Mammary epithelial cell (primary cell): ENCODE measurements at regions of chr16 and their contacts with region 1.

Region 1: GRCh38 chr16:79510879-79511278 is 89.7 kb downstream of the MAF start:
- DNase-seq: no peak
- H3K4me3 ChIP-seq: no peak overlapping the region
- H3K27ac ChIP-seq: no peak overlapping the region
- H3K4me1 ChIP-seq: no peaks in the 10 kb centered on the region
- H3K27me3 ChIP-seq: no peaks in the 10 kb centered on the region
- CTCF ChIP-seq: no peak

Region 2: DNA sequence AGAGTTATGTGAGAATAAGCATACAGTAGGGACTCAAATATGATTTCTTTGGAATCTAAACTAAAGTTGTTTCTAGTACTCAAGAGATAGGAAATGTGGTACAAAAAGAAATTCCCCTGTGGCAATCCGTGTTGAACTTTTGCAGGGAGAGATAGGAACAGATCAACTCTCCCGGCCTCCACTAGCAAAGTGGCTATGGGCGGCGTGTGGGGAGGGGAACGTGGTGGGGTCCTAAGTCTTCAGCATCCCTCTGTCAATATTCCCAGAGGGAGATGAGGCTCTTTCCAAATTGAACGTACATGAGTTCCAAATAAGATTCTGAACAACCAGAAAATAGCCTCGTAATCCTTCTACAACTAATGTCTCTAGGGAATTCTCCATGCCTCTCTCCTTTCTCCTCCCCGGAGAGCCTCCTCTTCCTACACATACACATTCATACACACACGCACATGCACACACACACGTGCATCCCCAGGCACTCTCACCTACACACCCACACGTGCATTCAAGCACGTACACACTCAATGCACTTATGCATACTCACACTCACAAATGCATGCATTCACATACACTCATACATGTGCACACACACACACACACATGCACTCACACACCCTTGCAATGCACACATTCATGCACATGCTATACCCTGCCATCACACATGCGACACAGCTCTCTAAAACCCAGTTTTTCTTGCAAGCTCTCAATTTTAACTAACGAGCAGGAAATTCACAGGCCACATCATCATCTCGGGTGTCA is 155.1 kb before region 1 on chr16:
- CTCF ChIA-PET with region 1: no interaction called
- dilution Hi-C with region 1: no loop called
- in situ Hi-C with region 1: no loop called
- intact Hi-C with region 1: no loop called
- DNase-seq: no peak
- H3K4me3 ChIP-seq: no peak overlapping the region
- H3K27ac ChIP-seq: no peak overlapping the region
- H3K4me1 ChIP-seq: no peaks in the 10 kb centered on the region
- H3K27me3 ChIP-seq: no peaks in the 10 kb centered on the region
- CTCF ChIP-seq: no peak

Region 3: GRCh38 chr16:79547085-79547484 is 36.2 kb after region 1 on chr16:
- CTCF ChIA-PET with region 1: no interaction called
- dilution Hi-C with region 1: loop called (anchors 5 kb)
- in situ Hi-C with region 1: no loop called
- intact Hi-C with region 1: no loop called
- DNase-seq: no peak
- H3K4me3 ChIP-seq: no peak overlapping the region
- H3K27ac ChIP-seq: no peak overlapping the region
- H3K4me1 ChIP-seq: no peaks in the 10 kb centered on the region
- H3K27me3 ChIP-seq: no peaks in the 10 kb centered on the region
- CTCF ChIP-seq: no peak